ENCODE measurements at regions of chr5 and their contacts with region 1.

Region 1: DNA sequence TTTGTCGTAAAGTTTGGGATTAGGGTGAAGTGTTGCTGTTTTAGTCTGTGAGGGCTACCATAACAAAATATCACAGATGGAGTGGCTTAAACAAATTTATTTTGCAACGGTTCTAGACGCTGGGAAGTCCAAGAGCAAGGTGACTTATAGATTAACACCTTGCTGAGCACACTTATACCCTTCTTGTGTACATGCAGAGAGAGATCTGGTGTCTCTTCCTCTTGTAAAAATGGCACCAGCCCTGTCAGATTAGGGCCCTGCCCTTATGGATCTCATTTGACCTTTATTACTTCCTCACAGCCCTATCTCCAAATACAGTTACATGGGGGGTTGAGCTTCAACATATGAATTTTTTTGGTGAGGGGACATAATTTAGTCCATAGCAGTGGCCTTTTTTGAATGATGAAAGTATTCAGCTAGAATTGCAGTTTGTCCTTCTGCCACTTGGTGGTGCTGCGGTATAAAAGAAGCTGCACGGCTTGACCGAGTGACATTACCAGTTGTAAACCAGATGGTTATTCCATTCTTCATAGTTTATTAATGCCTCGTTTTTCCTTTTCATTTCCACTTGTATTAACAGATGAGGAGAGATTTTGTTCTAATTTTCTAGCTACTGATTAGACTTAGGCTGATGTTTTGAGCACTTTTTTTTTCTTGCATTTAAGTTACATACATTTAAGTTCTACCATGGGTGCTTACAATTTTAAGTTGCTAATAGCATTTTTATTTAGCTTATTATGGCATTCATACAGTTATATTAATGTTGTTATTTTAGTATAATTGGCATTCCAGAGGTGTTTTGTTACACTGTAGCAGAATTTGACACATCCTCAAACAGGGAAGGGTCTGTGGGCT is 19.4 kb downstream of the DCP2 start:
- DNase-seq: peak; percentile 47 to 77 (median 66)
- ATAC-seq: peak; percentile 90
- H3K4me3 ChIP-seq: no peak overlapping the region
- H3K4me3 Mint-ChIP-seq: peak overlapping the region in 3 of 10 donors; percentile 2 to 38 (median 24)
- H3K27ac ChIP-seq: no peak overlapping the region
- H3K27ac Mint-ChIP-seq: peak overlapping the region in 4 of 9 donors; percentile 29 to 62 (median 48)
- H3K4me1 ChIP-seq: peaks cover 0 to 7% of the 10 kb centered on the region in 2 donors
- H3K4me1 Mint-ChIP-seq: peaks cover 9 to 42% (median 36%) of the 10 kb centered on the region in 7 donors
- H3K27me3 ChIP-seq: no peaks in the 10 kb centered on the region
- H3K27me3 Mint-ChIP-seq: no peaks in the 10 kb centered on the region

Region 2: GRCh38 chr5:113034182-113034773 is 38.3 kb after region 1 on chr5:
- CTCF ChIA-PET with region 1: interaction called, 4 read pairs
- POLR2A ChIA-PET with region 1: no interaction called
- intact Hi-C with region 1: loop called in 1 of 2 experiments (anchors 5 kb)
- DNase-seq: no peak
- ATAC-seq: no peak
- H3K4me3 ChIP-seq: no peak overlapping the region
- H3K4me3 Mint-ChIP-seq: no peak overlapping the region
- H3K27ac ChIP-seq: no peak overlapping the region
- H3K27ac Mint-ChIP-seq: no peak overlapping the region
- H3K4me1 ChIP-seq: peaks cover 0 to 4% of the 10 kb centered on the region in 2 donors
- H3K4me1 Mint-ChIP-seq: peaks cover 0 to 11% (median 3%) of the 10 kb centered on the region in 7 donors
- H3K27me3 ChIP-seq: no peaks in the 10 kb centered on the region
- H3K27me3 Mint-ChIP-seq: no peaks in the 10 kb centered on the region

Region 3: DNA sequence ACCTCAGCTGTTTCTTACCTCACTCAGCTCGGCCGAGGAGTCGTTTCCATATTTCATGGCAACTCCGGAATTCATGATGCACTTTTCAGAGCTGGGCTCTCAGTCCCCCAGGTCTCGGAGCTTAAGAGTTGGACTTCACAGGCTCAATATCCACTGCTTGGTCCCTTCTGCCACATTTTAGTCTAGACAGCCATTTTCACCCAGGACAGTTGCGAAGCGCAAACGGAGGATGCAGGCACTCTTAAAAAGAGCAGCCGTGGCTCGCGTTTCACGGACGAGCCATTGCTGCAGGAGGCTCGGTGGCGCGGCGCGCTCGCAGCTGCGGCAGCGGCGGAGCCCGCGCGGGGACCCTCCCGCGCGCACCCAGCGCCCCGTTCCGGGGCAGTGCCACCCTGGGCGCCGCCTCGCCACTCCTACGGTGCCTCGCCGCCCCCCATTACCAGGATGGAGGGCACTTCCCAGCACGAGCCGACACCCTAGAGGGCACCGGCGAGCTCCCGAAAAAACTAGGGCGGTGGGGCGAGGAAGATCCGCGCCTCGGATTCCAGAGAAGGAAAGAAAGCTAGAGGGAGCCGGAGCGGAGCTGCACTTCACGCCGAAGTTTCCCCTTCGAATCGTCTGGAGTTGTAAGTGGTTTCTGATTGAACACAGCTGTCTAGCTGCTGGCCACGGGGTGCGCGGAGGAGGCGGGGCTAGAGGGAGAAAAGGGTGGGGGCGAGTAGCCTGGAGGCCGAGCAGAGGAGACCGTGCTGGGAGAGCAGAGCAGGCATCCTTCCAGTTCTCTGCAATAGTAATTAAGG is 298.5 kb after region 1 on chr5:
- CTCF ChIA-PET with region 1: no interaction called
- POLR2A ChIA-PET with region 1: no interaction called
- intact Hi-C with region 1: loop called (anchors 1 kb)
- DNase-seq: peak; percentile 30 to 72 (median 62)
- ATAC-seq: peak; percentile 92
- H3K4me3 ChIP-seq: peak overlapping the region; percentile 64
- H3K4me3 Mint-ChIP-seq: peak overlapping the region; percentile 88 to 96 (median 92)
- H3K27ac ChIP-seq: peak overlapping the region; percentile 43
- H3K27ac Mint-ChIP-seq: peak overlapping the region in 6 of 9 donors; percentile 21 to 86 (median 46)
- H3K4me1 ChIP-seq: peaks cover 8 to 11% of the 10 kb centered on the region in 2 donors
- H3K4me1 Mint-ChIP-seq: peaks cover 13 to 28% (median 21%) of the 10 kb centered on the region in 7 donors
- H3K27me3 ChIP-seq: no peaks in the 10 kb centered on the region
- H3K27me3 Mint-ChIP-seq: peaks cover 30 to 82% (median 59%) of the 10 kb centered on the region in 5 donors

Region 4: GRCh38 chr5:113513384-113514288 is 517.6 kb after region 1 on chr5 and contains the start of gene YTHDC2:
- CTCF ChIA-PET with region 1: interaction called, 8 read pairs
- POLR2A ChIA-PET with region 1: interaction called, 3 read pairs
- intact Hi-C with region 1: loop called (anchors 1 to 2 kb)
- DNase-seq: peak; percentile 79 to 89 (median 87)
- ATAC-seq: peak; percentile 97
- H3K4me3 ChIP-seq: peak within 1 kb of the TSS; percentile 85
- H3K4me3 Mint-ChIP-seq: peak within 1 kb of the TSS; percentile 86 to 98 (median 94)
- H3K27ac ChIP-seq: peak within 1 kb of the TSS; percentile 94
- H3K27ac Mint-ChIP-seq: peak within 1 kb of the TSS; percentile 86 to 98 (median 97)
- H3K4me1 ChIP-seq: peaks cover 6 to 9% of the 10 kb centered on the region in 2 donors
- H3K4me1 Mint-ChIP-seq: peaks cover 27 to 51% (median 44%) of the 10 kb centered on the region in 7 donors
- H3K27me3 ChIP-seq: no peaks in the 10 kb centered on the region
- H3K27me3 Mint-ChIP-seq: peaks cover 12 to 19% (median 13%) of the 10 kb centered on the region in 5 donors
- total RNA-seq, gene YTHDC2: 27.7 to 53.6 (median 49.2) TPM